ENCODE measurements at regions of chr1 and their contacts with region 1.

Region 1: GRCh38 chr1:211578640-211579433 is at the start of gene SLC30A1:
- DNase-seq: peak; percentile 98 to 100 (median 99)
- ATAC-seq: peak; percentile 92
- H3K4me3 ChIP-seq: peak within 1 kb of the TSS; percentile 96
- H3K4me3 Mint-ChIP-seq: peak within 1 kb of the TSS; percentile 97
- H3K27ac ChIP-seq: peak within 1 kb of the TSS; percentile 41 to 78
- H3K27ac Mint-ChIP-seq: peak within 1 kb of the TSS; percentile 86
- H3K4me1 ChIP-seq: peaks cover 19% of the 10 kb centered on the region
- H3K4me1 Mint-ChIP-seq: peaks cover 49% of the 10 kb centered on the region
- H3K27me3 ChIP-seq: no peaks in the 10 kb centered on the region
- H3K27me3 Mint-ChIP-seq: no peaks in the 10 kb centered on the region
- CTCF ChIP-seq: no peak
- total RNA-seq, gene SLC30A1: 6.0 TPM

Region 2: DNA sequence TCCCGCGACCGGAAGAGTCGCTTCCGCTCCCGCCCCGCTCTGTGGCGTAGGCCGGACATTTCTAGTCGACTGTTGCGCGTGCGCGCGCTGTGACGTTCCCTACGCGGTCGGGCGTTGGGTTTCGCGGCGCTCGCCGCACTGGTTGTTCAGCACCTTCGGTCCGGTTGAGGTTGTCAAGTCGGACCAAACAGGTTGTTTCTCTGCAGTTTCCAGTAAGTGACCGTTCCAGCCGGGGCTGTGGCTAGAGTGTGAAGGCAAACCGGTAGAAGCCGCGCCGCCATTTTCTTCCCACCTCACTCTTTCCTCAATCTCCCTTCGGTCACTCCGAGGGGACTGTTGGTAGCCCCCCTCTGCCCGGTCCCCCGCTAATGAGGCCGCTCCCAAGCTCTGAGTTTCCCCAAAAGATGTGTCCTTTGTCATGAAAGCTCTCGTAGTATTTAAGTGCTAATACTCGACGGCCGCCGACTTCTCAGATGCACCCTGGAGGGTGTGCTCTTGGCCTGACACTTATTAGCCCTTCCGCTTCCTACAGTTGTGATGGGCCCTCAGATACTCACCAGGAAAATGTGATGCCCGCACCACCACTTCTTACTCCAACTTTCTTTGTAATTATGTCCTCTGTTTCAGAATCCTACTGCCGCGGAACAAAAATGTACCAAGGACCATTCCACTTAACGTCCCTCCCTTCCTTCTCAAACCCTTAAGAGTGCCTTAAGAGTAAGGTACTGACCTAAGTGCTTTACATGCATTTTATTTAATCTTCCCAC is 195.9 kb before region 1 on chr1:
- CTCF ChIA-PET with region 1: no interaction called
- POLR2A ChIA-PET with region 1: no interaction called
- intact Hi-C with region 1: loop called in 1 of 2 experiments (anchors 5 kb)
- DNase-seq: peak; percentile 55 to 88 (median 73)
- ATAC-seq: peak; percentile 82
- H3K4me3 ChIP-seq: peak overlapping the region; percentile 92
- H3K4me3 Mint-ChIP-seq: peak overlapping the region; percentile 85
- H3K27ac ChIP-seq: peak overlapping the region; percentile 75 to 94
- H3K27ac Mint-ChIP-seq: peak overlapping the region; percentile 86
- H3K4me1 ChIP-seq: peaks cover 8% of the 10 kb centered on the region
- H3K4me1 Mint-ChIP-seq: peaks cover 35% of the 10 kb centered on the region
- H3K27me3 ChIP-seq: no peaks in the 10 kb centered on the region
- H3K27me3 Mint-ChIP-seq: no peaks in the 10 kb centered on the region
- CTCF ChIP-seq: no peak

Region 3: DNA sequence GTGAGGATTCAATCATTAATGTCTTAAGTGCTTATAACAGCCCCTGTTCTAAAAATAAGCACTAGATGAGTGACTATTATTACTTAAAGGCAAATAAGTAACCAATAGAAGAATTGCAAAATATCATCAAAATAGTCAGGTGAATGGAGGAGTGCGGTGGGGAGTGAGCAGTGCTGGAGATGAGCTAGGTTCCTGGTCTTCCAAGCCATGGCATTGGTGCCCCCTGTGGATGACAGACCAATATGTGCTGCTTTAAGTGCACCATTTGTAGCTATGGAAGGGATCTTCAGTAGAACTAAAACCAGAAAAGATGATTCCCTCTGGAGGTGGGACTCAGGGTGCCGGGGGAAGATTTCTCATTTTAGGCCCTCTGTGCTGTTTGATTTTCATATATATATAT is 46.2 kb after region 1 on chr1:
- CTCF ChIA-PET with region 1: interaction called, 8 read pairs
- POLR2A ChIA-PET with region 1: interaction called, 6 read pairs
- intact Hi-C with region 1: loop called in 1 of 2 experiments (anchors 2 kb)
- DNase-seq: peak in 9 of 14 experiments; percentile 5 to 72 (median 24)
- ATAC-seq: peak; percentile 52
- H3K4me3 ChIP-seq: no peak overlapping the region
- H3K4me3 Mint-ChIP-seq: no peak overlapping the region
- H3K27ac ChIP-seq: no peak overlapping the region
- H3K27ac Mint-ChIP-seq: no peak overlapping the region
- H3K4me1 ChIP-seq: peaks cover 4% of the 10 kb centered on the region
- H3K4me1 Mint-ChIP-seq: peaks cover 6% of the 10 kb centered on the region
- H3K27me3 ChIP-seq: no peaks in the 10 kb centered on the region
- H3K27me3 Mint-ChIP-seq: no peaks in the 10 kb centered on the region
- CTCF ChIP-seq: no peak

Region 4: DNA sequence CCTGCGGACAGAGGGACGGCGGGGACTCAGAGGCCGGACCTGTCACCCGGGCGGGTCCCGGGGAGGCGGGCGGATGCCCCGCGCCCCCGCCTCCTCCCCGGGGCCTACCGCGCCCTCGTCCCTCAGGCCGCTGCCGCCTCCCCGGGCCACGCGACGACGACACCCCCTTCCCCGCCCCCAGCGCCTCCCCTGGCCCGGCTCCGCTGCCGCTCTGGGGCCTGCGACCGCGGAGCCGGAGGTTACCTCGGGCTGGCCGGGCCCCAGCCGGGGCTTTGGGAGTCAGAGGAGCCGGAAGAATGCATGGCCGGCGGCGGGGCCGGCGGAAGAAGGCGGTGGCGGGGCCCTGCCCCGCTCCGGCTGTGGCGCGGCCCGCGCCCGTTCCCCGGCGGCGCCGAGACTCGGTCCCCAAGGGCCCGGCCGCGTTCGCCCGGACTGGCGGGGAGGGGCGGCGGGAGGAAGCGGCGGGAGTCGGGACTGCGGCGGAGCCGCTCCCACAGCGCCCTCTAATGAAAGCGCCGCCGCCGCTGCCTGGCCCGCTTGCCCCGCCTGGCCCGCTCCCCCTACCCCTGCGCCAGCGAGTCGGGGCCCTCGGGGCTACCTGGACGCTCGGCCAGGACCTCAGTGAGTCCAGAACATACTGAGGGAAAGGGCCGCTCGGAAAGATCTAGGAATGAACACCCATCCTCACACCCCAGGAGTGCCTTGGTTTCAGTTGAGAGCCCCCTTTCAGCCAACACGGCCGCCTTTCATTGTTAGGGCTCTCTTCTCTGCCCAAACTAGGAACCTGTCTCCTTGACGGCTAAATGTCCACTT is 251.7 kb after region 1 on chr1 and contains the start of gene LPGAT1:
- CTCF ChIA-PET with region 1: no interaction called
- POLR2A ChIA-PET with region 1: no interaction called
- intact Hi-C with region 1: loop called in 1 of 2 experiments (anchors 5 kb)
- DNase-seq: peak; percentile 47 to 85 (median 64)
- ATAC-seq: peak; percentile 82
- H3K4me3 ChIP-seq: peak within 1 kb of the TSS; percentile 82
- H3K4me3 Mint-ChIP-seq: peak within 1 kb of the TSS; percentile 95
- H3K27ac ChIP-seq: peak within 1 kb of the TSS in 1 of 2 donors; percentile 66
- H3K27ac Mint-ChIP-seq: peak within 1 kb of the TSS; percentile 84
- H3K4me1 ChIP-seq: peaks cover 42% of the 10 kb centered on the region
- H3K4me1 Mint-ChIP-seq: peaks cover 68% of the 10 kb centered on the region
- H3K27me3 ChIP-seq: no peaks in the 10 kb centered on the region
- H3K27me3 Mint-ChIP-seq: no peaks in the 10 kb centered on the region
- CTCF ChIP-seq: peak; percentile 62
- total RNA-seq, gene LPGAT1: 14.0 to 14.4 TPM

Region 5: GRCh38 chr1:212414328-212415106 is 835.7 kb after region 1 on chr1 and contains the start of gene PACC1:
- CTCF ChIA-PET with region 1: no interaction called
- POLR2A ChIA-PET with region 1: no interaction called
- intact Hi-C with region 1: loop called in 1 of 2 experiments (anchors 5 kb)
- DNase-seq: peak; percentile 70 to 95 (median 81)
- ATAC-seq: peak; percentile 85
- H3K4me3 ChIP-seq: peak within 1 kb of the TSS; percentile 76
- H3K4me3 Mint-ChIP-seq: peak within 1 kb of the TSS; percentile 89
- H3K27ac ChIP-seq: peak within 1 kb of the TSS; percentile 40 to 72
- H3K27ac Mint-ChIP-seq: peak within 1 kb of the TSS; percentile 82
- H3K4me1 ChIP-seq: peaks cover 30% of the 10 kb centered on the region
- H3K4me1 Mint-ChIP-seq: peaks cover 22% of the 10 kb centered on the region
- H3K27me3 ChIP-seq: no peaks in the 10 kb centered on the region
- H3K27me3 Mint-ChIP-seq: no peaks in the 10 kb centered on the region
- CTCF ChIP-seq: no peak
- total RNA-seq, gene PACC1: 1.8 to 2.1 TPM

Measured in CD4-positive, alpha-beta T cell (primary cell).